ENCODE measurements at regions of chr12 and their contacts with region 1.

Region 1: GRCh38 chr12:6965026-6965661 is 5.3 kb downstream of the PHB2 start:
- DNase-seq: peak; percentile 91 to 93
- H3K4me3 ChIP-seq: peak overlapping the region; percentile 64
- H3K4me3 Mint-ChIP-seq: peak overlapping the region; percentile 81
- H3K27ac Mint-ChIP-seq: peak overlapping the region; percentile 93
- H3K4me1 ChIP-seq: peaks cover 39% of the 10 kb centered on the region
- H3K4me1 Mint-ChIP-seq: peaks cover 37% of the 10 kb centered on the region
- H3K27me3 ChIP-seq: no peaks in the 10 kb centered on the region
- H3K27me3 Mint-ChIP-seq: no peaks in the 10 kb centered on the region
- CTCF ChIP-seq: peak; percentile 95 to 96

Region 2: GRCh38 chr12:6873094-6874014 is 91.8 kb before region 1 on chr12 and contains the start of gene SPSB2:
- CTCF ChIA-PET with region 1: interaction called, 19 read pairs
- POLR2A ChIA-PET with region 1: interaction called, 5 read pairs
- intact Hi-C with region 1: no loop called
- DNase-seq: peak; percentile 100
- H3K4me3 ChIP-seq: peak within 1 kb of the TSS; percentile 89
- H3K4me3 Mint-ChIP-seq: peak within 1 kb of the TSS; percentile 98
- H3K27ac Mint-ChIP-seq: peak within 1 kb of the TSS; percentile 95
- H3K4me1 ChIP-seq: peaks cover 26% of the 10 kb centered on the region
- H3K4me1 Mint-ChIP-seq: peaks cover 47% of the 10 kb centered on the region
- H3K27me3 ChIP-seq: no peaks in the 10 kb centered on the region
- H3K27me3 Mint-ChIP-seq: no peaks in the 10 kb centered on the region
- CTCF ChIP-seq: no peak
- total RNA-seq, gene SPSB2: 23.7 and 24.7 TPM in 2 replicates

Region 3: GRCh38 chr12:6927379-6928024 is 37.6 kb before region 1 on chr12 and contains the start of gene ATN1:
- CTCF ChIA-PET with region 1: interaction called, 8 read pairs
- POLR2A ChIA-PET with region 1: no interaction called
- intact Hi-C with region 1: loop called (anchors 1 kb)
- DNase-seq: peak; percentile 85 to 87
- H3K4me3 ChIP-seq: peak within 1 kb of the TSS; percentile 91
- H3K4me3 Mint-ChIP-seq: peak within 1 kb of the TSS; percentile 85
- H3K27ac Mint-ChIP-seq: peak within 1 kb of the TSS; percentile 76
- H3K4me1 ChIP-seq: peaks cover 43% of the 10 kb centered on the region
- H3K4me1 Mint-ChIP-seq: peaks cover 66% of the 10 kb centered on the region
- H3K27me3 ChIP-seq: no peaks in the 10 kb centered on the region
- H3K27me3 Mint-ChIP-seq: no peaks in the 10 kb centered on the region
- CTCF ChIP-seq: no peak
- total RNA-seq, gene ATN1: 126 TPM in 2 replicates

Region 4: GRCh38 chr12:6952121-6952862 is 12.9 kb before region 1 on chr12:
- CTCF ChIA-PET with region 1: interaction called, 241 read pairs
- POLR2A ChIA-PET with region 1: interaction called, 237 read pairs
- intact Hi-C with region 1: no loop called
- DNase-seq: no peak
- H3K4me3 ChIP-seq: no peak overlapping the region
- H3K4me3 Mint-ChIP-seq: no peak overlapping the region
- H3K27ac Mint-ChIP-seq: no peak overlapping the region
- H3K4me1 ChIP-seq: no peaks in the 10 kb centered on the region
- H3K4me1 Mint-ChIP-seq: peaks cover 7% of the 10 kb centered on the region
- H3K27me3 ChIP-seq: no peaks in the 10 kb centered on the region
- H3K27me3 Mint-ChIP-seq: no peaks in the 10 kb centered on the region
- CTCF ChIP-seq: no peak

Region 5: GRCh38 chr12:7092229-7092985 is 127.3 kb after region 1 on chr12 and contains the start of gene C1R:
- CTCF ChIA-PET with region 1: no interaction called
- POLR2A ChIA-PET with region 1: interaction called, 3 read pairs
- intact Hi-C with region 1: loop called (anchors 5 kb)
- DNase-seq: peak; percentile 71 to 81
- H3K4me3 ChIP-seq: peak within 1 kb of the TSS; percentile 11
- H3K4me3 Mint-ChIP-seq: peak within 1 kb of the TSS; percentile 56
- H3K27ac Mint-ChIP-seq: peak within 1 kb of the TSS; percentile 76
- H3K4me1 ChIP-seq: peaks cover 5% of the 10 kb centered on the region; the same call in 1 of the 2 replicates
- H3K4me1 Mint-ChIP-seq: no peaks in the 10 kb centered on the region
- H3K27me3 ChIP-seq: no peaks in the 10 kb centered on the region
- H3K27me3 Mint-ChIP-seq: no peaks in the 10 kb centered on the region
- CTCF ChIP-seq: peak; percentile 94 to 97
- total RNA-seq, gene C1R: 3.9 and 4.2 TPM in 2 replicates

Measured in Caco-2 (cell line).